Psoas muscle (tissue), 8 donors: ENCODE measurements at regions of chr22 and their contacts with region 1.

Region 1: GRCh38 chr22:45263463-45264269 is 21.1 kb upstream of the UPK3A start:
- DNase-seq: peak; percentile 83 to 88
- ATAC-seq: peak; percentile 92 to 98 (median 96)
- H3K4me3 ChIP-seq: no peak overlapping the region
- H3K27ac ChIP-seq: peak overlapping the region; percentile 46
- H3K4me1 ChIP-seq: peaks cover 14% of the 10 kb centered on the region
- H3K27me3 ChIP-seq: no peaks in the 10 kb centered on the region
- CTCF ChIP-seq: peak; percentile 62

Region 2: DNA sequence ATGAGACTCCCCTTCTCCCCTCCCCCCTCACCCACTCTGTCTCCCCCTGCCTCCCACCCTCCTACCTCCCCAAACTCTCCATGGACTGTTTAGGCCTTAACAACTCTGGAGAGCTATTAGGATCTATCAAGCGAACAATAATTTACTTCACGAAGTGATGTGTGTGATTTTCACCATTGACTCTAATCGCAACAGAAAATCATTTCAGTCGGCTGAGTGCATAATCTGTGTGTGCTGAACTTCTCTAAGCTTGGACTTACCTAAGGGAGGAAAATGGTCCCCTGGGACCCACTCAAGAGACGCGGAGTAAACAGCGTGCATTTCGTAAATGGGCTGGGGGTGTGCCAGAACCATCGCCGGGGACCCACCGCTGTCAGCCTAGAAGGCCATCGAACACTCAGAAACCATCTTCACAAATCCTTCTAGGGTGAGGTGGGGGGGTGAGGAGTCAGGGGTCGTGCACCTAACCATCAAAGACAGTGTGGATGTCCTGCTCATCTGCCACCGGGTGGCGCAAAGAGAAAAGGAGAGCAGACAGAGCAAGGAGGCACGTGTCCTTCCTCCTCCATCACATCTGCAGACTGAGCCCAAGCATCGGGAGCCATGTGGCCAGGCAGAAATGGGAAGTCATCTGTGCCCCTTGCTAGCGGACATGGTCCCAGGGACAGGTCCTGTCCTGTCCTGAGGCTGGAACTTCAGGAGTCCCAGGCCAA is 162.0 kb before region 1 on chr22:
- intact Hi-C with region 1: loop called in 1 of 2 experiments (anchors 5 kb)
- DNase-seq: peak in 1 of 2 donors; percentile 47
- ATAC-seq: peak in 2 of 4 donors; percentile 43 to 61
- H3K4me3 ChIP-seq: no peak overlapping the region
- H3K27ac ChIP-seq: no peak overlapping the region
- H3K4me1 ChIP-seq: no peaks in the 10 kb centered on the region
- H3K27me3 ChIP-seq: peaks cover 0 to 33% (median 8%) of the 10 kb centered on the region in 3 donors
- CTCF ChIP-seq: peak; percentile 13